GM10248 (cell line): ENCODE measurements at regions of chr5 and their contacts with region 1.

Region 1: DNA sequence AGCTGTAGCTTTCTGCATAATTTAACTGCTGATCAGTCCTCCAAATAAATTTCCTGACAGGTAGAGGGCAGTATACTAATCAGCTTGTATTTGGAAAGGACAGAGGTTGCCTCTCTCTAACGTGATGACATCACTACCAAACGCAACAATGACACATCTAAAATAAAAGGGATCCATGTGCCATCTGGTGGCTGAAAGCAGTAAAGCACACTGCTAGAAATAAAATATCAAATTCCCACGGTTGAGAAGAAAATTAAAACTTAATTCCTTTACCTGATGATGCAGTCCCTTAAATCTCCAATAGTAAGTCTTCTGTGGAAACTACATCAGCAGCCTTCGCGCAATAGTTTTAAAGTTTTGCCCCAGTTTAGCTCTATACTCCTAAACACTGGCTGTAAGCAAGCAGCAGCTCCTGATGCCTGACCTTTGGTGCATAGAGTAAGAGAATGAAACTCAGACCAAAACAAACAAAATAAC is 54.5 kb downstream of the DIAPH1 start:
- DNase-seq: peak; percentile 68
- CTCF ChIP-seq: peak; percentile 60

Region 2: DNA sequence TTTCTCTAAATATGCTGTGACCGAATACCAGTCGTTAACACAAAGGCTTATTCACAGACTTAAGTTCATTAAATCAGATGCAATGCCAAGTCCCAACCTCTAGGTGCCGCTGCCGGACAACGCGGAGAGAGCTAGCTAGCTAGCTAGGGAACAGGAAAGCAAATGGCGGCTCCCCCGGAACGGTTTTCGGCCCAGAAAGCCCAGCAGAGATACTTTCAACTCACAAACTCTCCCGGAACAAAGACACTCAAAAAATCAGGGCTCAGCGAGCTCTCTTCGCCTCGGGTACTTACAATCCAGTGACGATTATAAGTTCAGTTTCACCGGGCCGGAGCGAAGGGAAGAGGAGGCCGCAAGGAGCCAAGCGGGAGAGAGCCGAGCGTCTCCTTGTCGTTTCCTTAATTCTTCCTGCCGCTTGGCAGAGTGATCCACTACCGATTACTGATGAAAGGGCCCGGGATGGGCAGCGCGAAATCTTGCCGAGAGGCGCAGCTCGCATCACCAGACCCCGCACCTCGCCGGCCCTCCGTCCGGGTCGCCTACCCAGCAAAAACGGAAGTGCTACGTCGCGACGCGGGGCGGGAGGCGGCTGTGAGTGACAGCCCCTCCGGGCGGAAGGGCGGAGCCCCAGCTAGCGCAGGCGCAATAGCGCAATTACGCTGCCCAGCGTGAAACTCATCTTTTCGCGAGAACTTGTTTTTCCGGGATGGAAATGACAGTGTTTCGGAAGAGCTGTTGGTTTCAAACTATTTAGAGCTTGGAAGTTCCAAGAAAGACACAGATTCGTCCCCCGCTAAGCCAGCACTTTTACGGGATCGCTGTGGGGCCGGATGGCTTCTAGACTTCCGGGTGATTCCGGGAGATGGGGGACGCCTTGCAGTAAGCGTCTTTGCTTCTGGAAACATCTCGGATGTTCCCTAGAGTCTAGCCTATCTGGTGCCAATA is 243.8 kb before region 1 on chr5 and contains the start of gene TAF7:
- CTCF ChIA-PET with region 1: interaction called, 27 read pairs
- POLR2A ChIA-PET with region 1: interaction called, 4 read pairs
- DNase-seq: peak; percentile 93
- CTCF ChIP-seq: peak; percentile 95

Region 3: GRCh38 chr5:141349917-141350619 is 214.2 kb before region 1 on chr5 and contains the start of gene PCDHGB1:
- CTCF ChIA-PET with region 1: interaction called, 14 read pairs
- POLR2A ChIA-PET with region 1: no interaction called
- DNase-seq: peak; percentile 68
- CTCF ChIP-seq: peak; percentile 62

Region 4: GRCh38 chr5:141430332-141431113 is 133.7 kb before region 1 on chr5 and contains the start of gene PCDHGA12:
- CTCF ChIA-PET with region 1: interaction called, 24 read pairs
- POLR2A ChIA-PET with region 1: no interaction called
- DNase-seq: peak; percentile 85
- CTCF ChIP-seq: peak; percentile 9

Region 5: DNA sequence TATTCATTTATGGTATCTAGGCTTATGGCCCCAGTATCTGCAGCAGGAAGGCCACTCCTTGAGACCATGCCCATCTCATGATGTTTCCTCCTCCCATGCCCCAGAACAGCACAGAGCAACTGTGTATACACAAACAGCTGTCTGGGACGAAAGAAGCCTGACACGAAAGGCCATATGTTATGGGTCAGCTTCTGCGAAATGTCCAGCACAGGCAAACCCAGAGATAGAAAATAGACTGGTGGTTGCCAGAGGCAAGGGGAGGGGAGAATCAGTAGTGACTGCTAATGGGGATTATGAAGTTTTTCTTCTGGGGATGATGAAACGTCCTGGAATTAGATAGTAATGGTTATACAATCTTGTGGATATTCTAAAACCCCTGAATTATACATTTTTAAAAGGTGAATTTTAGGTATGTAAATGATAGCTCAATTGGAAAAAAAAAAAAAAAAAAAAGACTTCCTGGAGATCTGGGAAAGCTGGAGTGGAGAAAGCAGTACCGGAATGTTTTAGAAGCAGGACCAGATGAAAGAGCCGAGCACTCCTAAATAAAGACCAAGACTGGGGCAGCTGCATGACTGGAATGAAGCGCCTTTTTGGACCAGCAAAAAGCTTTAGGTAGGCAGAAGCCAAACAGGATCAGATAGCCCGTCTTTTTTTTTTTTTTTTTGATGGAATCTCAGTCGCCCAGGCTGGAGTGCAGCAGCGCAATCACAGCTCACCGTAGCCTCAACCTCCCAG is 46.2 kb before region 1 on chr5:
- CTCF ChIA-PET with region 1: interaction called, 33 read pairs
- POLR2A ChIA-PET with region 1: no interaction called
- DNase-seq: no peak
- CTCF ChIP-seq: no peak

Region 6: GRCh38 chr5:141547488-141547887 is 16.8 kb before region 1 on chr5:
- CTCF ChIA-PET with region 1: interaction called, 37 read pairs
- POLR2A ChIA-PET with region 1: no interaction called
- DNase-seq: no peak
- CTCF ChIP-seq: no peak

Region 7: DNA sequence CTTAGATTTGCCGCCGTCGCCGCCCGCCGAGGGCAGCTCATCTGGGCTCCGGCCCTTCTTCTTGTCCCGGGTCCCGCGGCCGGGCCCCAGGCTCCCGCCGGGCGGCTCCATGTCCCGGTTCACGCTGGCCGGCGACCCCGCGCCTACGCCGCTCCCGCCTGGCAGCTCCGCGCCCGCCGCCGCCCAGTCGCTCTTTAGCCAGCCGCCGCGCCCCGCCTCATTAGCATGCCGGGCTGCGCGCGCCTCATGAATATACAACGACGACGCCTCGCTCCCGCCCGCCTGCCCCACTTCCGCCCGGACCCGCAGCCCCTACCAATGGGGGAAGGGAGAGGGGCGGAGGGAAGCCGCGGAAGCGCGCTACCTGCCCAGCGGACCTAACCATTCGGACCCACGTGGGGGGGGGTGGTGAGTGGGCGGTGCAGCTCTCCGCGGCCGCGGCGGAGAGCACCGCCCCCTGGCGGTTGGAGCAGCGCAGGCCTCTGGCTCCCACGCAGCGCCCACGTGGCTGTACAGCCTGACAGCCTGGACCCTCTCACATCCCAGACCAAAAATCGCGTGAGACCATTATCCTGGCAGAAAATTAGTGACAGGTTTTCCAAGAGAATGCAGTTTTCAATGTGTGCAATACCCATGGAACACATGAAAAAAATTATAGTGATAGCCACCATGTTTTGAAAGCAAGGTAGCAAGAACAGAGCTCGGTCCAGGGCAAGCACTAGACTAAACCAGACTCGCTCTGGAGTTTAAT is 54.7 kb after region 1 on chr5 and contains the start of gene DIAPH1:
- CTCF ChIA-PET with region 1: interaction called, 17 read pairs
- POLR2A ChIA-PET with region 1: no interaction called
- DNase-seq: peak; percentile 96
- CTCF ChIP-seq: peak; percentile 92